ENCODE measurements at regions of chr10 and their contacts with region 1.

Region 1: DNA sequence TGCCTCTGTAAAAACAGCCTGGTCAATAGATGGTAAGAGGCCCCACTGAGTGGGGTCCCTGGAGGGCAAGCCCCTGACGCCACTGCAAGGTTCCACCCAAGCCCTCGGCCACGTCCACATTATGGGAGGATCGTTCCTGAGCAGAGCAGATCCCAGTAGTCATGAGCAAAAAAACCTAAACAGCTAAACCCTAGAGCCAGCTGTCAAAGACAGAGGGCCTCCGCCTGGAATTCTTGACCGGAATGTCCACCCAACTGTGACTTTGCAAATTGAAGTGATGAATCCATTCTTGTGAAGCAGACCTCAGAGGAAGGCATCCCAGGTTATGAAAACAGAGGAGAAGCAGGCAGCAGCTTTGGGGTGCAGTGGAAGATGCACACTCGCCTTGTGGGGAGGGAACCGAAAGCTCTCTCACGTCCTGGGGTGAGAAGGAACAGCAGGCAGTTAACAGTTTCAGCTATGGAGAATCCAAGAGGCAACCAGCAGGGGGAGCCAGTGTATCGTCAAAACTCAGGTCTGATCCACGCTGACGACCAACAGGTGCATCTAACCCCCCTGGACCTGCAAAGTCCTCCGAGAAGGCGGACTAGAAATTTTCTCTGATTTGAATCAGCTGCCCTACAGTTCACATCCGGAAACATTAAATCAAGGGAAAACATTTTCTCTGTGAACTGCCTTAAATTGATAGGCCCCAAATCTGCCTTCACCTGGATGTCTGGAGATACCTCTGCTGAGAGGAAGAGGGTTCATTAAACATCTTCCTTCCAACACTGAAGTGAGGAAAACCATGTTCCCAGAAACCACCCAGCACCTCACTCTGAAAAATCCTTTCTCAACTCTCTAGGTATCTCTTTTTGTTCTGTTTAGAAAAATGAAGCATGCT is 139.1 kb upstream of the PFKP start:
- DNase-seq: peak; percentile 74
- H3K27ac ChIP-seq: no peak overlapping the region
- CTCF ChIP-seq: peak; percentile 56

Region 2: GRCh38 chr10:2895594-2896196 is 32.5 kb before region 1 on chr10:
- CTCF ChIA-PET with region 1: no interaction called
- POLR2A ChIA-PET with region 1: no interaction called
- DNase-seq: no peak
- H3K27ac ChIP-seq: no peak overlapping the region
- CTCF ChIP-seq: no peak

Region 3: DNA sequence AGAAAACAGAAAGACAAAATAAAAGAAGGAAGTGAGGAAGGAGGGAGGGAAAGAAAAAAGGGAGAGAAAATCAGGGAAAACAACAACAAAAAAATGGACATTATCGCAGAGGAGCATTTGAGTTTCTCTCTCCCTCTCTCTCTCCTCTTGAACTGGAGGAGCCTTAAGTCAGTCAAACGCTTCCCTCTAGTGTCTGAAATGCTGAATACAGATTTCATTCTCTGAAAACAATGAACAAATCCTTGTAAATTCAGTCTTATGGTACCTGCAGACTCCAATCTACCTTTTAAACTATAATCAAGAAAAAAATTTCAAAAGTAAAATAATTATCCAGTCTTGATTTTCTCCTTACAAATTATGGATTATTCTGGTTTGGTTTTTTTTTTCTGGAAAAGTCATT is 49.9 kb after region 1 on chr10:
- CTCF ChIA-PET with region 1: interaction called, 13 read pairs
- POLR2A ChIA-PET with region 1: no interaction called
- DNase-seq: peak; percentile 62
- H3K27ac ChIP-seq: no peak overlapping the region
- CTCF ChIP-seq: peak; percentile 42